ENCODE measurements at regions of chr6 and their contacts with region 1.

Region 1: GRCh38 chr6:28981833-28982475 is 23.2 kb downstream of the ZNF311 start:
- DNase-seq: peak; percentile 93
- H3K4me3 Mint-ChIP-seq: peak overlapping the region; percentile 75
- H3K27ac Mint-ChIP-seq: peak overlapping the region; percentile 91
- H3K4me1 Mint-ChIP-seq: peaks cover 37% of the 10 kb centered on the region
- H3K27me3 Mint-ChIP-seq: no peaks in the 10 kb centered on the region
- CTCF ChIP-seq: no peak

Region 2: DNA sequence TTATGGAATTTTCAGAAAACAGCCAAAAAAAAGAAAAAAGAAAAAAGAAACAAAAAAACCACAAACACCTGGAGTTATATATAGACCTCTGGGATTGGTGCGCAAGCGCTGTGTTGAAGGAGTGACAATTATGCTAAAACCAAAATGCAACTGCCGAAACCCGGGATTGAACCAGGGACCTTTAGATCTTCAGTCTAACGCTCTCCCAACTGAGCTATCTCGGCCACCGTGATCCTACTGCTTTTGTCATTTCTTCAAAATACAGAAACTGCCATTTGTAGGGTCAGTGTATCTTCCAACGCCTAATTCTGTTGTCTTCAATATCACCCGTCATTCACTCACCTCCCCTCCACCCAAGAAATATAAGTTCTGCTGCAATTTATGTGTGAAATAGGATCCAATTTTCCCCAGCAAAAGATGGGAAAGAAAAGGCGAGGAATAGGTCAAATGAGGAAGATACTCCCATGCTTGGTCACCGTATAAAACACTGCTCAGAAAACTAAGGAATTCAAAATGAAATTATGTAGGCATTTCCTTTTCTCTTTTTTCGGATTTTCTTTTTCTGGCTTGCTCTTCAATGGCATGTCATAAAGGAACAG is 174.2 kb before region 1 on chr6:
- CTCF ChIA-PET with region 1: no interaction called
- POLR2A ChIA-PET with region 1: interaction called, 4 read pairs
- intact Hi-C with region 1: loop called (anchors 1 kb)
- DNase-seq: peak; percentile 76
- H3K4me3 Mint-ChIP-seq: peak overlapping the region; percentile 41
- H3K27ac Mint-ChIP-seq: no peak overlapping the region
- H3K4me1 Mint-ChIP-seq: peaks cover 23% of the 10 kb centered on the region
- H3K27me3 Mint-ChIP-seq: no peaks in the 10 kb centered on the region
- CTCF ChIP-seq: no peak

Region 3: DNA sequence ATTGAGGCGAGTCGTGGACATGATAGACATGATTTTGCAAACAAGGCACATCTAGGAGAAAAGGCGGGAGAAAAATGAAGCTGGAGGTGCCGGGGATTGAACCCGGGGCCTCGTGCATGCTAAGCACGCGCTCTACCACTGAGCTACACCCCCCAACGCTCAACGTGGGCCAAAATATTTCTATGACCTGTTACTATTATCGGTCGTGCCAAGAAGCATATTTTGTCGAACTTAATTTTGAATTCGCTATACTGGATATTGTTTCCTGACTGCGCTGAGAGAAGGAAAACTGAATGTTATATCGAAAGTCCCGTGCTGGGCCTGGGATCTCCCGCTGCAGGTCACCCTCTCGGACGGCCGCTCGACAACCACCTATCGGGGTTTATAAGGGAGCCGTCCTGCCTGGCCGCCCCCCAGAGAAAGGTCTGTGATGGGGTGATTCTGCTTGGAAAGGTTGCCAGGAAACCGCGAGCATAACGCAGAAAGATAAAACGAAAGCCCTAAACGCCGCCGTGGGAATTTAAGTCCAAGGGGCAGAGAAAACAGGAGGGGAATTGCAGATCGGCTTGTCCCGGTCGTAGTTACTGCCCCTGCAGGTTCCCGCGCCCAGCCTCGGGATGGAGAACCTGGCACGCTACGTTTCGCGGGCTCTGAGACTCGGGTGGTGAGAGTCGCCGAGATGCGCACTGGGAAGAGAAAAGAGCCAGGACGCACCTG is 118.2 kb before region 1 on chr6:
- CTCF ChIA-PET with region 1: interaction called, 3 read pairs
- POLR2A ChIA-PET with region 1: interaction called, 14 read pairs
- intact Hi-C with region 1: no loop called
- DNase-seq: peak; percentile 81
- H3K4me3 Mint-ChIP-seq: peak overlapping the region; percentile 93
- H3K27ac Mint-ChIP-seq: peak overlapping the region; percentile 53
- H3K4me1 Mint-ChIP-seq: peaks cover 14% of the 10 kb centered on the region
- H3K27me3 Mint-ChIP-seq: no peaks in the 10 kb centered on the region
- CTCF ChIP-seq: peak; percentile 7

Region 4: DNA sequence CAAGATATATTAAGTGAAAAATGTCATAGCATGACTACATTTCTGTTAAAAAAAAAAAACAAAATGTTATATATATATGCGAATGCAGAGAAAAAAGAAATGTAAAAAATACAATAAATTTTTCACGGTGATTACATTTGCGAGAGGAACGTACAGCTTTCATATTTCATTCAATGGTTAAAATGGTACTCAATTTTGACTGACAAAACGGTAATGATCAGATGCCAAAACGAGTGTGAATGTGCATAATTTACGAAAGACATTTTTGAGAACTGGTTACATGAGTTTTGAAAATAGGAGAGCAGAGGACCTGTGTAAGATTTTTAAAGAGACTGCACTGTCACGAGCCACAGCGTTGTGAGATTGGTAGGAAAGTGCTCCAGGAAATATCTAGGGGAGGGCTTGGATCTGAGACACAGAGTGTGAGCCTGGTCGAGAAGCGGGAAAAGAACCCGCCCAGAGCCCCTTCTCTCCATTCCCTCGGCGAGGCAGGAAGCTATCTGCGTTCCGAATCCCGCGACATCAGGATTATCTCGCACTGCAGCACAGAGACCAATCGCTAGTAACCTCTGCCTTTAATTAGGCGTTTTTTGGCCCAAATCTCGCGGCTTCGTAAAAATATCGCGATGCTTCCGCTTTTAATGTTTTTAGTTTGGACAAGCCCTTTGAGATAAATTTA is 86.7 kb before region 1 on chr6:
- CTCF ChIA-PET with region 1: no interaction called
- POLR2A ChIA-PET with region 1: interaction called, 31 read pairs
- intact Hi-C with region 1: loop called (anchors 2 kb)
- DNase-seq: peak; percentile 96
- H3K4me3 Mint-ChIP-seq: peak overlapping the region; percentile 90
- H3K27ac Mint-ChIP-seq: peak overlapping the region; percentile 100
- H3K4me1 Mint-ChIP-seq: no peaks in the 10 kb centered on the region
- H3K27me3 Mint-ChIP-seq: no peaks in the 10 kb centered on the region
- CTCF ChIP-seq: no peak

Region 5: GRCh38 chr6:28940858-28941680 is 40.9 kb before region 1 on chr6:
- CTCF ChIA-PET with region 1: interaction called, 3 read pairs
- POLR2A ChIA-PET with region 1: interaction called, 77 read pairs
- intact Hi-C with region 1: loop called (anchors 1 kb)
- DNase-seq: peak; percentile 90
- H3K4me3 Mint-ChIP-seq: peak overlapping the region; percentile 83
- H3K27ac Mint-ChIP-seq: peak overlapping the region; percentile 57
- H3K4me1 Mint-ChIP-seq: peaks cover 7% of the 10 kb centered on the region
- H3K27me3 Mint-ChIP-seq: no peaks in the 10 kb centered on the region
- CTCF ChIP-seq: no peak

Region 6: DNA sequence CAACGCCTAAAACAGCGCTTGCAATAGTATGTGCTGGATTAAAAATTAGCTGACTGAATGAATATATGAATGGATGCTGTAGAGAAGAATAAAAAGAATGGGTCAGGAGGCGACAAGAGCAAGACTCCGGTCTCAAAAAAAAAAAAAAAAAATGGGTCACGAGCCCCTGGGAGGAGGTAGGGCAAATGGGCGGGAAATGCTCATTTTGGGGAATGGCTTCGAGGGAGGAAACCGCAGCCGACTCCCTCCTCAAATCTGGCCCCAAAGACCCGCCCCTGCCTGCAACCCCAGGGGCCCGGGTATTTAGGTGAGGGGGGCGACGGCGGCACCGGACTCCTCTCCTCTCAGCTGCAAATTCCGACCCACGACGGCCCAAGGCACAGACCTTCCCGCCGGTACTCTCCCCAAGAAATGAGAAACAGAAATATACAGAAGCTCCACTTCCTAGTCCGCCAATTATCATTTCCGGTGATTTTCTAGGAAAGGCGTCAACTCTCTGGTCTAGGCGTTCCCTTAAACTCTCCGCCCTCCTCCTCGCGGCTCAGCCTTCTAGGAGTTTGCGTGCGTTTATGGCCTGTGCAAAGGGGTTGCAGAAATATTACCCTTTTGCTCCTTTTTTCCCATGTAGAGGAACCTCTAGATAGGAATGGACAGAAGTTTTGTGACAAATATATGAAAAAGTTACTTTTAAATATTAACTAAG is 23.4 kb after region 1 on chr6 and contains the start of gene ZNF311:
- CTCF ChIA-PET with region 1: interaction called, 4 read pairs
- POLR2A ChIA-PET with region 1: interaction called, 15 read pairs
- intact Hi-C with region 1: no loop called
- DNase-seq: peak; percentile 79
- H3K4me3 Mint-ChIP-seq: peak within 1 kb of the TSS; percentile 91
- H3K27ac Mint-ChIP-seq: peak within 1 kb of the TSS; percentile 65
- H3K4me1 Mint-ChIP-seq: peaks cover 18% of the 10 kb centered on the region
- H3K27me3 Mint-ChIP-seq: no peaks in the 10 kb centered on the region
- CTCF ChIP-seq: no peak
- total RNA-seq, gene ZNF311: 3.6 and 5.0 TPM in 2 replicates

Region 7: DNA sequence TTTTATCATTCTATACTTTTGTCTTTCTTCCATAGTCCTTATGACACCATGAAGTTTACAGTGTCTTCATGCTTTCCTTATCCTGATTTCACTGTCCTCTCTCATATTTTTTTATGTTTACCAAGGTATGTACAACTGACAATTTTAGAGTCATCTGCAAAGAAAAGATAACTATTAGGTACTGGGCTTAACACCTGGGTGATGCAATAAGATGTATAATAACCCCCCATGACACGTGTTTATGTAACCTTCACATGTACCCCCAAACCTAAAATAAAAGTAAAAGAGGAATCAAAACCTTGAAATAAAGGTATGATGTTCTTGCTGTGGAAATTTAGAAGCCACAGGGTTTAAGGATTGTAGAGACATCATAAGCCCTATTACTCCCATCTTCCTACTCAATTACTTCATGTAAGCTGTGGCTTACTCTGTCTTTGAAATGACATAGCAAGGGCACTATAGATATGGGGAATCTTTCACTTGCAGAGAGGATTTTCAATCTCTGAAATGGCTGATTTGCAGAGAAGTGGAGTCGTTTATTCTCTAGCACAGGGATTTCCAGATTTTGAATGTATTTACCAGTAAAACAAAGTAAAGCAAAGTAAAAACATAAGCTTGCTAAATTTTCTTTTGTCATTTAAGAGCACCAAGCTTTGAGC is 44.1 kb after region 1 on chr6:
- CTCF ChIA-PET with region 1: no interaction called
- POLR2A ChIA-PET with region 1: no interaction called
- intact Hi-C with region 1: no loop called
- DNase-seq: no peak
- H3K4me3 Mint-ChIP-seq: no peak overlapping the region
- H3K27ac Mint-ChIP-seq: no peak overlapping the region
- H3K4me1 Mint-ChIP-seq: no peaks in the 10 kb centered on the region
- H3K27me3 Mint-ChIP-seq: peaks cover 70% of the 10 kb centered on the region
- CTCF ChIP-seq: no peak